HEK293 (cell line): ENCODE measurements at regions of chr6 and their contacts with region 1.

Region 1: GRCh38 chr6:14066782-14067406 is 50.7 kb upstream of the CD83 start:
- H3K4me3 ChIP-seq: no peak overlapping the region
- H3K27ac ChIP-seq: no peak overlapping the region
- H3K4me1 ChIP-seq: no peaks in the 10 kb centered on the region
- CTCF ChIP-seq: peak; percentile 53

Region 2: DNA sequence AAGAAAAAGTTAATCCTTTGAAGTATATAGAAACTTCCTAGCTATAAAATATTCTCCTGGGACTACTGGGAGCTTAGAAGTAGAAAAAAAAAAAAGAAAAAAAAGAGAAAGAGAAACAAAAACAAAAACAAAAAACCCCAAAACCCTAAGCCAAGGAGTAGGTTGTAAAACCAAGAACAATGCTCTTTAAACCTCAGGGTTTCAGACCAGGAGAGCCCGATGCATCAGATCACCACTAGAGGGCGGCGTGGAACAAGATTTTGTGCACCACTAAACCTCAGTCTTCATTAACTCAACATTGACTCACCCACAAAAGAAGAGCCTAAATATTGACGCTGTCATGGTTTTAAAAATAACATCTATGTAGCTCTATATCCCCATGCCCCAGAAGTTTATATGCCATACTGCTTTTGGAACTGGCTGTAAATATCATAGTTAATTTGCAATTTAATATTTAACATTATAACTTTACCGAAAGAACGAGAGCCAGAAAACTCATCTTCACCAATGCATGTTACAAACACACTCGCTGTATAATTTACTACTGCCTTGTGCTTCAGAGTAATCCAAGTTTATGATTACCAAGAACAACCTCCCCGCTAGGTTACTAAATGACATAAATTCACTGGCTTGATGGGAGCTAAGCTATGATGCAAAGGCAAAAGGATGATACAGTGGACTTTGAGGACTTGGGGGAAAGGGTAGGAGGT is 271.7 kb before region 1 on chr6:
- CTCF ChIA-PET with region 1: interaction called, 43 read pairs
- POLR2A ChIA-PET with region 1: no interaction called
- H3K4me3 ChIP-seq: no peak overlapping the region
- H3K27ac ChIP-seq: no peak overlapping the region
- H3K4me1 ChIP-seq: peaks cover 4% of the 10 kb centered on the region; the same call in 1 of the 2 replicates
- CTCF ChIP-seq: peak; percentile 64; the same call in 1 of the 2 replicates

Region 3: GRCh38 chr6:13873285-13874190 is 193.4 kb before region 1 on chr6:
- CTCF ChIA-PET with region 1: interaction called, 32 read pairs
- POLR2A ChIA-PET with region 1: no interaction called
- H3K4me3 ChIP-seq: peak overlapping the region; percentile 25
- H3K27ac ChIP-seq: no peak overlapping the region; the same call in 1 of the 2 replicates
- H3K4me1 ChIP-seq: no peaks in the 10 kb centered on the region
- CTCF ChIP-seq: peak; percentile 99

Region 4: GRCh38 chr6:14037402-14038277 is 29.3 kb before region 1 on chr6:
- CTCF ChIA-PET with region 1: interaction called, 20 read pairs
- POLR2A ChIA-PET with region 1: no interaction called
- H3K4me3 ChIP-seq: no peak overlapping the region
- H3K27ac ChIP-seq: no peak overlapping the region
- H3K4me1 ChIP-seq: no peaks in the 10 kb centered on the region
- CTCF ChIP-seq: no peak

Region 5: GRCh38 chr6:14082771-14083170 is 15.9 kb after region 1 on chr6:
- CTCF ChIA-PET with region 1: interaction called, 42 read pairs
- POLR2A ChIA-PET with region 1: no interaction called
- H3K4me3 ChIP-seq: no peak overlapping the region
- H3K27ac ChIP-seq: no peak overlapping the region
- H3K4me1 ChIP-seq: no peaks in the 10 kb centered on the region
- CTCF ChIP-seq: no peak

Region 6: DNA sequence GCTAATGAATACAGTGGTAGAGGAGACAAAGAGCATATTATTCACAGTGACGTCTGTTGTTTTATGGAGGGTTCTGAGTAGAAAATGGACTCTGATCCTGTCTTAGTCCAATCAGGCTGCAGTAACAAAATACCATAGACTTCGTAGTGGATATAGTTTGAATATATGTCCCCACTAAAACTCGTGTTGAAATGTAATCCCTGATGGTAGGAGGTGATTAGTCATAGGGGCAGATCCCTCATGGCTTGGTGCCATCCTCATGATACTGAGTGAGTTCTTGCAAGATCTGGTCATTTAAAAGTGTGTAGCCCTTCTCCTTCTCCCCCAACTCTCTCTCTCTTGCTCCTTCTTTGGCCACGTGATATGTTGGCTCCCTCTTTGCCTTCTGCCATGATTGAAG is 133.2 kb after region 1 on chr6:
- CTCF ChIA-PET with region 1: no interaction called
- POLR2A ChIA-PET with region 1: no interaction called
- H3K4me3 ChIP-seq: no peak overlapping the region
- H3K27ac ChIP-seq: no peak overlapping the region
- H3K4me1 ChIP-seq: peaks cover 2% of the 10 kb centered on the region
- CTCF ChIP-seq: no peak

Region 7: GRCh38 chr6:14270925-14271791 is 204.3 kb after region 1 on chr6:
- CTCF ChIA-PET with region 1: no interaction called
- POLR2A ChIA-PET with region 1: no interaction called
- H3K4me3 ChIP-seq: no peak overlapping the region
- H3K27ac ChIP-seq: no peak overlapping the region
- H3K4me1 ChIP-seq: no peaks in the 10 kb centered on the region
- CTCF ChIP-seq: no peak